Naive thymus-derived CD4-positive, alpha-beta T cell (primary cell): ENCODE measurements at regions of chr11 and their contacts with region 1.

Region 1: DNA sequence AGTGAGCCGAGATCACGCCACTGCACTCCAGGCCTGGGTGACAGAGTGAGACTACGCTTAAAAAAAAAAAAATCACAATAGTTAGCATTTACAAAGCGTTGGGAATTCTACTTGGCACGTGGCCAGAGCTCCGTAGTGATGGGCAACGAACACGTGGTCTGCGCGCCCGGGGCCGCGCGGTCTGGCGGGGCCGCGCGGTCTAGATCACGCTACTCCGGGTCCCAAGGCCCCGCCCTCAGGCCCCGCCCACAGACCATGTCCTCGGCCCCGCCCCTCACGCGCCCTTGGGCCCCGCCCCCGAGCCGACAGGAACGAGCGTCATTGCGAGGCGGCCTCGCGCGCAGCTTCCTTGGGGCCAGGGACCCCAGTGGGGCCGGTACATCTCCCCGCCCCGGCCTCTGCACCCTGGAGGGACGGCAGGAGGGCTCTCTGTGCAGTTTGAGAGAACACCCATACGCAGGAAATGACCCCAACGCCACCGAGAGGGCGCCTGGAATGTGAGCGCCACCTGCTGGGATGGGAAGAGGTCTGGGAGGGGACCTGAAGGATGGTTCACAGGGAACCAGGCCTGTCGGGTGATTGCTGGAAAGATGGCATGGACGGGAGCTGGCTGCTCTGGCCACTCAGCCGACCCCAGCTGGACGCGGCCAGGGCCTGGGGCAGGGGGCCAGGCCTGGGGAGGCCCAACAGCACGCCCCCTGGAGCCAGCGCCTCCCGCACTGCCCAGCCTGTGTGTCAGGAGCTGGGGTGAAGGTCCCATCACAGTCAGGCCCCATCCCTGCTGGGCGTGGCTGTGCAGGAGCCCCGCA is 2.0 kb upstream of the PTDSS2 start:
- DNase-seq: peak; percentile 86 to 98 (median 93)
- ATAC-seq: peak; percentile 86
- H3K4me3 ChIP-seq: peak overlapping the region; percentile 74
- H3K4me3 Mint-ChIP-seq: peak overlapping the region; percentile 84 to 95 (median 89)
- H3K27ac ChIP-seq: peak overlapping the region; percentile 98
- H3K27ac Mint-ChIP-seq: peak overlapping the region; percentile 79 to 98 (median 95)
- H3K4me1 ChIP-seq: peaks cover 16 to 24% of the 10 kb centered on the region in 2 donors
- H3K4me1 Mint-ChIP-seq: peaks cover 9 to 25% (median 22%) of the 10 kb centered on the region in 7 donors
- H3K27me3 ChIP-seq: no peaks in the 10 kb centered on the region
- H3K27me3 Mint-ChIP-seq: peaks cover 0 to 7% (median 0%) of the 10 kb centered on the region in 5 donors

Region 2: GRCh38 chr11:199782-200181 is 248.3 kb before region 1 on chr11:
- CTCF ChIA-PET with region 1: no interaction called
- POLR2A ChIA-PET with region 1: no interaction called
- intact Hi-C with region 1: loop called in 1 of 2 experiments (anchors 5 kb)
- DNase-seq: peak in 2 of 9 donors; percentile 7 to 19
- ATAC-seq: no peak
- H3K4me3 ChIP-seq: no peak overlapping the region
- H3K4me3 Mint-ChIP-seq: no peak overlapping the region
- H3K27ac ChIP-seq: no peak overlapping the region
- H3K27ac Mint-ChIP-seq: peak overlapping the region in 1 of 9 donors; percentile 25
- H3K4me1 ChIP-seq: peaks cover 9 to 34% of the 10 kb centered on the region in 2 donors
- H3K4me1 Mint-ChIP-seq: peaks cover 26 to 42% (median 38%) of the 10 kb centered on the region in 7 donors
- H3K27me3 ChIP-seq: no peaks in the 10 kb centered on the region
- H3K27me3 Mint-ChIP-seq: no peaks in the 10 kb centered on the region

Region 3: DNA sequence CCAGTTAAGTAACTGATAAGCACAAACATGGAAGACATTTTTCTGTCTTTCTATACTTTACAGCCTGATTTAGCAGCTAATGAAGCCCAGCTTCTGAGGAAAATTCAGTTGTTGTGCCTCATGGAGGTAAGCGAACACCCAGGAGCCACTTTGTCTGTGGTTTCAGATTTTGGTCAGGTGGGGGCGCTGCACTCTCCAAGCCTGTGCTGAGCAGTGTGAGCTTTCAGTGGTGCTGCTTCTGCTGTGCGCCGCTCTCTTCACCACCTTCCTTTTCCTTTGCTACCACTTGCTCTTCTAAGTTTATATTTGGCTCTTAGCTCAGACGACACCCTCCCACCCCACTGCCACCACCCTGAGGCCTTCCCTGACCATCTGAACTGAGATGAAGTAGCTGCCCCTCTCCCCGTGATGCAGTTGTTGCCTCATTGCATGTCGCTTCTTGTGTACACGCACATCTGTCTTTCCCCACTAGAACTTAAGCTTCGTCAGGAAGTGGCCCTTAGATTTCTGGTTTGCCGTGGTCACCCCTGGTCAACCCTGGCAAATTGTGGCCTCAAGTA is 197.3 kb before region 1 on chr11:
- CTCF ChIA-PET with region 1: interaction called, 42 read pairs
- POLR2A ChIA-PET with region 1: interaction called, 5 read pairs
- intact Hi-C with region 1: loop called in 1 of 2 experiments (anchors 1 kb)
- DNase-seq: peak; percentile 72 to 87 (median 83)
- ATAC-seq: peak; percentile 99
- H3K4me3 ChIP-seq: no peak overlapping the region
- H3K4me3 Mint-ChIP-seq: peak overlapping the region in 1 of 10 donors; percentile 20
- H3K27ac ChIP-seq: peak overlapping the region; percentile 32
- H3K27ac Mint-ChIP-seq: peak overlapping the region; percentile 59 to 91 (median 66)
- H3K4me1 ChIP-seq: peaks cover 0 to 3% of the 10 kb centered on the region in 2 donors
- H3K4me1 Mint-ChIP-seq: peaks cover 9 to 18% (median 13%) of the 10 kb centered on the region in 7 donors
- H3K27me3 ChIP-seq: no peaks in the 10 kb centered on the region
- H3K27me3 Mint-ChIP-seq: peaks cover 0 to 3% (median 0%) of the 10 kb centered on the region in 5 donors

Region 4: GRCh38 chr11:304915-305843 is 142.9 kb before region 1 on chr11:
- CTCF ChIA-PET with region 1: interaction called, 6 read pairs
- POLR2A ChIA-PET with region 1: interaction called, 5 read pairs
- intact Hi-C with region 1: loop called in 1 of 2 experiments (anchors 1 kb)
- DNase-seq: peak in 6 of 9 donors; percentile 62 to 76 (median 70)
- ATAC-seq: peak; percentile 44
- H3K4me3 ChIP-seq: no peak overlapping the region
- H3K4me3 Mint-ChIP-seq: peak overlapping the region in 7 of 10 donors; percentile 0 to 55 (median 47)
- H3K27ac ChIP-seq: peak overlapping the region; percentile 95
- H3K27ac Mint-ChIP-seq: peak overlapping the region; percentile 14 to 97 (median 84)
- H3K4me1 ChIP-seq: peaks cover 21 to 24% of the 10 kb centered on the region in 2 donors
- H3K4me1 Mint-ChIP-seq: peaks cover 29 to 61% (median 48%) of the 10 kb centered on the region in 7 donors
- H3K27me3 ChIP-seq: no peaks in the 10 kb centered on the region
- H3K27me3 Mint-ChIP-seq: peaks cover 0 to 9% (median 0%) of the 10 kb centered on the region in 5 donors

Region 5: DNA sequence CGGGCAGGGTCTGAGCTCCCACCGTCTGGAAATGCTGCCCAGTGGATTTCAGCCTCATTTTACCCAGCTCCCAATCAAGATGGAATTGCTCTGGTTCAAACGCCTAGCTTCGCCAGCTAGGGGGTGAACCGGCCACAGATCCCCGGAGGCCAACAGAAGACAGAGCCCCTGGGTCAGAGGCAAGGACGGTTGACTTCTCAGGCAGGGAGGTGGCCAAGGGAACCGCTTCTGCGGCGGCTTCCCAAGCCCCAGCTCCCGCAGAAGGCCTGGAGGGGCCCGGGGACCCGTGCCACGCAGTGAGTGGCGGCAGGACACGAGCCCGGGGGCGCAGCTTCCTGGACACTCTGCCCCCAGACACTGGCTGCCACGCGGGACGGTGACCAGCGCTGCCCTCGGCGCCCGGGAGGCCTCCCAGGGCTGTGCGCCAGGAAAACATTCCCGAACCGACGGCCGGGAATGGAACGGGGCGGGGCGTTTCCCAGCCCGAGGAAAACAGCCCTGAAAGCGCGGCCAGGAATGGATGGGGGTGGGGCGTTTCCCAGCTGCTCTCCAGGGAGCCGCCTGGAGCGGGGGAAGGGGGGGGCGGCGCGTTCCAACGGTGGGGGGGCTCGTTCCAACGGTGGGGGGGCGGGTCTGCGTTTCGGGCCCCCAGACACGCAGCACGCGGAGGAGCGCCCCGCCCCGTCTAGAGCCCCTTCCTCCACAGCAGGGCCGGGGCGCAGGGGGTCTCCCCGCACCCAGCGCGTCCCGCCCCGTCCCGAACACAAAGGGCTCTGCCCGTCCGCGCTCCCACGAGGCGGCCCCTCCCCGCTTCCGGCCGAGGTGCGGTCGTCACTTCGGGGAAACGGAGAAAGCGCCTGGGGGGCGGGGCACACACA is 92.3 kb before region 1 on chr11:
- CTCF ChIA-PET with region 1: no interaction called
- POLR2A ChIA-PET with region 1: no interaction called
- intact Hi-C with region 1: loop called (anchors 2 kb)
- DNase-seq: peak; percentile 74 to 92 (median 90)
- ATAC-seq: peak; percentile 89
- H3K4me3 ChIP-seq: peak overlapping the region; percentile 66
- H3K4me3 Mint-ChIP-seq: peak overlapping the region in 8 of 10 donors; percentile 83 to 93 (median 88)
- H3K27ac ChIP-seq: peak overlapping the region; percentile 97
- H3K27ac Mint-ChIP-seq: peak overlapping the region in 6 of 9 donors; percentile 89 to 99 (median 98)
- H3K4me1 ChIP-seq: peaks cover 9 to 19% of the 10 kb centered on the region in 2 donors
- H3K4me1 Mint-ChIP-seq: peaks cover 29 to 45% (median 37%) of the 10 kb centered on the region in 7 donors
- H3K27me3 ChIP-seq: no peaks in the 10 kb centered on the region
- H3K27me3 Mint-ChIP-seq: peaks cover 0 to 6% (median 0%) of the 10 kb centered on the region in 5 donors

Region 6: GRCh38 chr11:416757-417621 is 31.1 kb before region 1 on chr11:
- CTCF ChIA-PET with region 1: interaction called, 16 read pairs
- POLR2A ChIA-PET with region 1: interaction called, 93 read pairs
- intact Hi-C with region 1: loop called (anchors 1 kb)
- DNase-seq: peak; percentile 34 to 71 (median 47)
- ATAC-seq: peak; percentile 38
- H3K4me3 ChIP-seq: peak overlapping the region; percentile 92
- H3K4me3 Mint-ChIP-seq: peak overlapping the region; percentile 48 to 100 (median 96)
- H3K27ac ChIP-seq: peak overlapping the region; percentile 75
- H3K27ac Mint-ChIP-seq: peak overlapping the region in 4 of 9 donors; percentile 68 to 78 (median 70)
- H3K4me1 ChIP-seq: peaks cover 11 to 21% of the 10 kb centered on the region in 2 donors
- H3K4me1 Mint-ChIP-seq: peaks cover 10 to 37% (median 17%) of the 10 kb centered on the region in 7 donors
- H3K27me3 ChIP-seq: no peaks in the 10 kb centered on the region
- H3K27me3 Mint-ChIP-seq: no peaks in the 10 kb centered on the region

Region 7: GRCh38 chr11:535519-536454 is 87.7 kb after region 1 on chr11 and contains the start of gene HRAS:
- CTCF ChIA-PET with region 1: no interaction called
- POLR2A ChIA-PET with region 1: interaction called, 3 read pairs
- intact Hi-C with region 1: loop called in 1 of 2 experiments (anchors 1 kb)
- DNase-seq: peak; percentile 92 to 99 (median 96)
- ATAC-seq: peak; percentile 93
- H3K4me3 ChIP-seq: peak within 1 kb of the TSS; percentile 66
- H3K4me3 Mint-ChIP-seq: peak within 1 kb of the TSS; percentile 87 to 97 (median 91)
- H3K27ac ChIP-seq: peak within 1 kb of the TSS; percentile 75
- H3K27ac Mint-ChIP-seq: peak within 1 kb of the TSS; percentile 84 to 96 (median 91)
- H3K4me1 ChIP-seq: peaks cover 20 to 21% of the 10 kb centered on the region in 2 donors
- H3K4me1 Mint-ChIP-seq: peaks cover 5 to 16% (median 11%) of the 10 kb centered on the region in 7 donors
- H3K27me3 ChIP-seq: no peaks in the 10 kb centered on the region
- H3K27me3 Mint-ChIP-seq: no peaks in the 10 kb centered on the region
- total RNA-seq, gene HRAS: 22.3 to 52.0 (median 31.9) TPM

Region 8: GRCh38 chr11:623999-624704 is 176.0 kb after region 1 on chr11:
- CTCF ChIA-PET with region 1: no interaction called
- POLR2A ChIA-PET with region 1: no interaction called
- intact Hi-C with region 1: no loop called
- DNase-seq: peak in 1 of 9 donors; percentile 6
- ATAC-seq: no peak
- H3K4me3 ChIP-seq: no peak overlapping the region
- H3K4me3 Mint-ChIP-seq: no peak overlapping the region
- H3K27ac ChIP-seq: no peak overlapping the region
- H3K27ac Mint-ChIP-seq: no peak overlapping the region
- H3K4me1 ChIP-seq: peaks cover 0 to 7% of the 10 kb centered on the region in 2 donors
- H3K4me1 Mint-ChIP-seq: peaks cover 11 to 17% (median 15%) of the 10 kb centered on the region in 7 donors
- H3K27me3 ChIP-seq: no peaks in the 10 kb centered on the region
- H3K27me3 Mint-ChIP-seq: peaks cover 17 to 20% (median 17%) of the 10 kb centered on the region in 5 donors

Region 9: DNA sequence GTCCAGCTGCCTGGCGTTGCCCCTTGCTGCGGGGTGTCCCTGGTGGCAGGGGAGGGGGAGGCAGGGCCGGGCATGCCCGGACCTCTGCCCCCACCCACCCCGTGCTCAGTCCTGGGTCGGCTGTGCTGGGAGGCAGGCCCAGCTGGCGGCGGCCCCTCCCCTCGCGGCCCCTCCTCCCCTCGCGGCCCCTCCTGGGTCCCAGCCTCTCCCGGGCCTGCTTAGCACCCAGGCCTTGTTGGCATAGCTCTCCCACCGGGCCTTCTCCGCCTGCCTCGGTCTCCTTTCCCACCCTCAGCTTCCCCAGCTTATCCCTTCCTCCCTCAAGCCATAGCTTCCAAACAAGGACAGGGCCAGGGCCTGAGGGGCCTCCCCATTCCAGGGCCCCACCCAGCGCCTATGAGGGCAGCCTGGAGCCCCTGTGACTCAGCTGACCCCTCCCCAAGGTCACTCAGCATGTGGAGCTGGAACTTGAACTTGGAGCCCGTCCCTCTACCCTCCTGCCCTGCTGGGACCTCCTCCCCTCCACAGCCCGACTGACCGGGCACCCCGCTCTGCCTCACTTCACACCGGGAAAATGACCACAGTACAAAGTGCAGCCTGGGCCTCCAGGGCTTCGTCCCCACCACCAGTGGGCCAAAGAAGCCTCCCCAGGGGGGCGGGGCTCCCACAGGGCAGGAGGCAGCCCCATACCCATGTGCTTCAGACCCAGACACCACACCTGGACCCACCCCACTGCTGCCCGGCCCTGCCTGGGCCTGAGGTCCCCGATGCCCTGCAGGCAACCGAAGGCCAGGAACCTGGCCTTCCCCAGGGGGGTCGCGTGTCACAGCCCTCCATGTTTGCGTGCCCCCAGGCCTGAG is 259.1 kb after region 1 on chr11:
- CTCF ChIA-PET with region 1: no interaction called
- POLR2A ChIA-PET with region 1: no interaction called
- intact Hi-C with region 1: no loop called
- DNase-seq: no peak
- ATAC-seq: no peak
- H3K4me3 ChIP-seq: no peak overlapping the region
- H3K4me3 Mint-ChIP-seq: peak overlapping the region in 3 of 10 donors; percentile 26 to 68 (median 49)
- H3K27ac ChIP-seq: no peak overlapping the region
- H3K27ac Mint-ChIP-seq: no peak overlapping the region
- H3K4me1 ChIP-seq: peaks cover 0 to 6% of the 10 kb centered on the region in 2 donors
- H3K4me1 Mint-ChIP-seq: peaks cover 0 to 17% (median 5%) of the 10 kb centered on the region in 7 donors
- H3K27me3 ChIP-seq: peaks cover 0 to 6% of the 10 kb centered on the region in 2 donors
- H3K27me3 Mint-ChIP-seq: peaks cover 0 to 29% (median 19%) of the 10 kb centered on the region in 5 donors